CD14-positive monocyte (primary cell): ENCODE measurements at regions of chr11 and their contacts with region 1.

Region 1: DNA sequence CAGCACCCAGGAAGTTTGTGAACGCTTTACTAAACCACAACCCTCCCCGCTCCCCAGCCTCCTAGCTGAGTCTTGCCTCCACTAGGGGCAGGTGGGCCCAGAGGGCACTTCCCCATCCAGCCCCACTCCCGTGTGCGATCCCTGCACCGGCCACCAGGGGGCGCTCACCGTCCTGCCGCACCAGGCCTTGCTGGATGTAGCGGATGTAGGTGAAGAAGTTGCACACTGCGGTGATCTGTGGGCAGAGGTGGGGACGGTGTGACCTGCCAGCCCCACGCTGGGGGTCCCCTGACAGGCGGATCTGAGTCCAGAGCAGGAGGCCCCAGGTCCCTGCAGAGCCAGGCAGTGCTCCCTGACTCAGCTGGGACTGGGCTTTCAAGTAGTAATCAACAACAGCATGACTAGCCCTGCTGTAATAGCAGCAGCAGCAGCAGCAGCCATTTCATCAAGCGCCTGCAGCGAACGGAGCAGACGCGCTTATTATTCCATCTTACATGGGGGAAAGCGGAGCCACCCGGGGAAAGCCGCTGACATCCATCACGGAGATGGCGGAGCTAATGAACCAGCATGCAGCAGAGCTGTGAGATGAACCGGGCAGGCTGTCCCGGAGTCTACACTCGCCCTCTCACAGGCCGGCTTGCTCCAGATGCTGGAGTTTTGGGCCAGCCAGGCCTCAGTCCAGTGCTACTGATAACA is 7.9 kb upstream of the FADS3 start:
- DNase-seq: peak; percentile 85 to 90 (median 89)
- H3K4me3 ChIP-seq: no peak overlapping the region
- H3K4me3 Mint-ChIP-seq: no peak overlapping the region
- H3K27ac ChIP-seq: no peak overlapping the region
- H3K27ac Mint-ChIP-seq: peak overlapping the region in 4 of 7 donors; percentile 7 to 71 (median 26)
- H3K4me1 ChIP-seq: peaks cover 0 to 21% of the 10 kb centered on the region in 2 donors
- H3K4me1 Mint-ChIP-seq: peaks cover 20% of the 10 kb centered on the region
- H3K27me3 ChIP-seq: peaks cover 0 to 6% of the 10 kb centered on the region in 2 donors
- H3K27me3 Mint-ChIP-seq: peaks cover 2 to 6% (median 6%) of the 10 kb centered on the region in 3 donors
- CTCF ChIP-seq: peak; percentile 99

Region 2: GRCh38 chr11:61805146-61805545 is 94.1 kb before region 1 on chr11:
- intact Hi-C with region 1: no loop called
- DNase-seq: no peak
- H3K4me3 ChIP-seq: no peak overlapping the region
- H3K4me3 Mint-ChIP-seq: no peak overlapping the region
- H3K27ac ChIP-seq: peak overlapping the region in 1 of 2 donors; percentile 22
- H3K27ac Mint-ChIP-seq: peak overlapping the region in 5 of 7 donors; percentile 19 to 52 (median 27)
- H3K4me1 ChIP-seq: no peaks in the 10 kb centered on the region
- H3K4me1 Mint-ChIP-seq: peaks cover 5% of the 10 kb centered on the region
- H3K27me3 ChIP-seq: no peaks in the 10 kb centered on the region
- H3K27me3 Mint-ChIP-seq: no peaks in the 10 kb centered on the region
- CTCF ChIP-seq: no peak

Region 3: GRCh38 chr11:61855939-61856680 is 43.2 kb before region 1 on chr11:
- intact Hi-C with region 1: no loop called
- DNase-seq: no peak
- H3K4me3 ChIP-seq: no peak overlapping the region
- H3K4me3 Mint-ChIP-seq: no peak overlapping the region
- H3K27ac ChIP-seq: no peak overlapping the region
- H3K27ac Mint-ChIP-seq: no peak overlapping the region
- H3K4me1 ChIP-seq: no peaks in the 10 kb centered on the region
- H3K4me1 Mint-ChIP-seq: peaks cover 1% of the 10 kb centered on the region
- H3K27me3 ChIP-seq: no peaks in the 10 kb centered on the region
- H3K27me3 Mint-ChIP-seq: no peaks in the 10 kb centered on the region
- CTCF ChIP-seq: no peak

Region 4: DNA sequence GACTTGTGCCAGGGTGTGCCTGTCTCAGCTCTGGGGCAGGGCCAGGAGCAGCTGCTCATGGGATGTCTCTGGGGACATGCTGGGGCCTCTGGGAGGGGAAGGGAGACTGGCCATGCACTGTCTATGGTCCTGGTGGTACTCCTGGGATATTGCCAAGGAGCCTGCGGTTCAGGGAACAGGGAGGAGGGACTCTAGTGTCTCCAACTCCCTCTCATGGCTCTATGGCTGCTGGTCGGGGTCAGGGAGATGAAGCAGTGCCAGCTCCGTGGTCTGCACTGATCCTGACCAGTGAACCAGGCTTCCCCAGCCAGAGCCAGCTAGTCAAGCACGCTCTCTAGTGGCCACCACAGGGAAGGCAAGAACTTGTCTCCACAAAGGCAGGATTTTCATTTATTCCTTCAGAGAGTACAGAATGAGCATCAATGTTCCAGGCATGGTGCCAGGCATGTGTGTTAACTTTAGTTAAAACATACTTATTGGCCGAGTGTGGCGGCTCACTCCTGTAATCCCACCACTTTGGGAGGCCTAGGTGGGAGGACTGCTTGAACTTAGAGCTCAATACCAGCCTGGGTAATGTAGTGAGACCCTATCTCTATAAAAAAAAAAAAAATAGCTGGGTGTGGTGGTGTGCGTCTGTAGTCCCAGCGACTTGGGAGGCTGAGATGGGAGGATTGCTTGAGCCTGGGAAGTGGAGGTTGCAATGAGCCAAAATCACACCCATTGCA is 48.4 kb after region 1 on chr11:
- intact Hi-C with region 1: loop called (anchors 1 to 2 kb)
- DNase-seq: peak; percentile 68 to 83 (median 76)
- H3K4me3 ChIP-seq: no peak overlapping the region
- H3K4me3 Mint-ChIP-seq: no peak overlapping the region
- H3K27ac ChIP-seq: no peak overlapping the region
- H3K27ac Mint-ChIP-seq: no peak overlapping the region
- H3K4me1 ChIP-seq: peaks cover 10 to 12% of the 10 kb centered on the region in 2 donors
- H3K4me1 Mint-ChIP-seq: peaks cover 17% of the 10 kb centered on the region
- H3K27me3 ChIP-seq: no peaks in the 10 kb centered on the region
- H3K27me3 Mint-ChIP-seq: peaks cover 0 to 6% (median 3%) of the 10 kb centered on the region in 3 donors
- CTCF ChIP-seq: peak; percentile 90

Region 5: DNA sequence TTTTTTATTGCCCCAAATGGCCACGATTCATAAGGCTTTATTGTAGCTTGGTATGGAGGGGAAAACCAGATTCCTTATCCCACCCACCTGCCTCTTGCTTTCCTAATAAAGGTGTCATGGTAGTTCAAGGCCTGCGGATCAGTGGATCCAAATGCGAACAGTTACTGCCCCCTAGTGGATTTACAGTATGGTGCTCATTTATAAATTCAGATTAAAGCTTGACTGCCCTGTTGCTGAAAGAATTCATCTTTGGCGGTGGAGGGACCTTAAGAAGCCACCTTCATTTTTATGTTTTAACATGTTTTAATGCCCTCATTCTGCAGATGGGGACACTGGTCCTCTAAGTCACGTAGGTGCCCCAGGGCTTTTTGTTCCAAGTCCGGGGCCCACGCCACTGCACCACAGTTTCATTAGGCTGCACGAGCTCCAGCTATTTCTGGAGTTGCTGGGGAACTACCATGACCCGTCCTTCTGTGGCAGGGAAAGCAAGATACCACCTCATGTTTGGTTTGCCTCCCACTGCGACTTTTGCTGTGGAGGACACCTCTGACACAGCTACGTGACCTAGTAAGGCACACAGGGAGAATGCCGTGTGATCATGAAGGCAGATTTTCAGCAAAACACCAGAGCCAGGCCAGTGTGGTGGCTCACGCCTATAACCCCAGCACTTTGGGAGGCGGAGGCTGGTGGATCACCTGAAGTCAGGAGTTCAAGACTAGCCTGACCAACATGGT is 208.9 kb after region 1 on chr11:
- intact Hi-C with region 1: loop called (anchors 2 kb)
- DNase-seq: peak; percentile 48 to 73 (median 66)
- H3K4me3 ChIP-seq: no peak overlapping the region
- H3K4me3 Mint-ChIP-seq: no peak overlapping the region
- H3K27ac ChIP-seq: no peak overlapping the region
- H3K27ac Mint-ChIP-seq: no peak overlapping the region
- H3K4me1 ChIP-seq: peaks cover 18 to 19% of the 10 kb centered on the region in 2 donors
- H3K4me1 Mint-ChIP-seq: peaks cover 14% of the 10 kb centered on the region
- H3K27me3 ChIP-seq: no peaks in the 10 kb centered on the region
- H3K27me3 Mint-ChIP-seq: peaks cover 2 to 10% (median 8%) of the 10 kb centered on the region in 3 donors
- CTCF ChIP-seq: peak; percentile 76

Region 6: DNA sequence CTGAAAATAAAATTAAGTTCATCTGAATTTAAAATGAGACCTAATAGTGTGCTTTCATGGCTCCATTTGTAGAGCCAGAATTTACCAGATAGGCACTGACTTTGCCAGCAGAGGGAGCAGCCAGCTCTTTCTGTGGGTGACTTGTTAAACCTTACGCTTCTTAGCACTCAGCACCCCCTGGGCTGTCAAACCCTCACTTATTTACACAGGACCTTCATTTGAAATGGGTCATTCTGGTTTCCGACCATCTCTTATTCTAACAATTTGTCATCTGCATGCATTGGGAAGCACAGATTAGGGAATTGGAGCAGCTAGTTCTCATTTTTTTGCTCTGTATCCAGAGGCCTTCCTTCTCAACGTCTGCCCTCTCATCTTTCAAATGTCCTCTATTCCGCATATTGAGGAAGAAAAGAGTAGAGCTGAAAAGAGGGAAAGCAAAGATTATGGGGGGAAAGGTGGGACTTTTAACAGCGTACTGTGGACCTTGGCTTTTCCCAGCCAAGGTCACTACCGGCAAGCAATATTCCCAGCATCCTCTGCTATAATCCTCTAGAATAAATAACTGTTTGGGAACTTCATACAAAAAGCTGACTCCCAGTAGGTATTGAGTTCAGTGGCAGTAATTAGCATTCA is 441.1 kb after region 1 on chr11:
- intact Hi-C with region 1: no loop called
- DNase-seq: peak; percentile 46 to 72 (median 56)
- H3K4me3 ChIP-seq: peak overlapping the region; percentile 19 to 72 (median 34)
- H3K4me3 Mint-ChIP-seq: peak overlapping the region; percentile 78 to 88
- H3K27ac ChIP-seq: peak overlapping the region in 1 of 2 donors; percentile 36
- H3K27ac Mint-ChIP-seq: peak overlapping the region; percentile 9 to 81 (median 71)
- H3K4me1 ChIP-seq: peaks cover 61 to 71% of the 10 kb centered on the region in 2 donors
- H3K4me1 Mint-ChIP-seq: peaks cover 83% of the 10 kb centered on the region
- H3K27me3 ChIP-seq: no peaks in the 10 kb centered on the region
- H3K27me3 Mint-ChIP-seq: peaks cover 0 to 2% (median 0%) of the 10 kb centered on the region in 3 donors
- CTCF ChIP-seq: peak; percentile 87